ENCODE measurements at regions of chr3 and their contacts with region 1.

Region 1: DNA sequence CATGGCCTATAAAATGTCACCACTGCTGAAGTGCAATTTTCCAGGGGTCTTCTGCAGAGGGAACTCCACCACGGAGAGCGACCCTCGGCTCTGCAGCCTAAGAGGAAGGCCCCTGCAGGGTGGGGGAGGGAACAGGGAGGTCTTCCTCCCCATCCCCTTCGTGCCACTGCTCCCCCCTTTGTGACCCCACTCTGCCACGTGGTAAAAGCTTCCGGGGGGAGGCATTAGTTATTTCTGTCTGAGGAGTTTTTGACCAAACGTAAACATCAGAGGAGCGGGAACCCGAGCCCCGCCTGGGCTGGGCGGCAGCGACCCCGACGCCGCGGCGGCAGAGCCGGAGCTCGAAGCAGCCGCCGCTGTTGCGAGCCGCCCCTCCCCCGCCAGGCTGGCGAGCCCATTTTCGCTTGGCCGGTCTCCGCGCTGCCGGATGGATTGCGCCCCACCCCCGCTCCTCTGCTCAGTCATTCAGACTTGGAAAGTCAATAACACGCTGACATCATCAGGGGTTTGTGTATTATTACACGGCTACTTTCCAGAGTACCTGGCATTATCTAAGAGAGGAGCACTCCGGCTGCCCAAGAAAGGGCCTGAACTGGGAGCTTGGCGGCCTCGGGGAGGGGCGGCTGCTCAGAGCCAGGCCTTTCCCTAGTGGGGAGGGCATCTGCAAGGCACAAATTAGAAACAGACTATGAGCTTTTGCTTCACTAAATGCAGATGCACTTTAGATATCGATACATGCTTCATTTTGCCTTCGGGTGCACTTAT is 162.5 kb upstream of the TBL1XR1 start:
- DNase-seq: peak; percentile 95
- H3K4me3 Mint-ChIP-seq: peak overlapping the region; percentile 61
- H3K27ac Mint-ChIP-seq: peak overlapping the region; percentile 92
- H3K4me1 Mint-ChIP-seq: peaks cover 43% of the 10 kb centered on the region
- H3K27me3 Mint-ChIP-seq: no peaks in the 10 kb centered on the region

Region 2: DNA sequence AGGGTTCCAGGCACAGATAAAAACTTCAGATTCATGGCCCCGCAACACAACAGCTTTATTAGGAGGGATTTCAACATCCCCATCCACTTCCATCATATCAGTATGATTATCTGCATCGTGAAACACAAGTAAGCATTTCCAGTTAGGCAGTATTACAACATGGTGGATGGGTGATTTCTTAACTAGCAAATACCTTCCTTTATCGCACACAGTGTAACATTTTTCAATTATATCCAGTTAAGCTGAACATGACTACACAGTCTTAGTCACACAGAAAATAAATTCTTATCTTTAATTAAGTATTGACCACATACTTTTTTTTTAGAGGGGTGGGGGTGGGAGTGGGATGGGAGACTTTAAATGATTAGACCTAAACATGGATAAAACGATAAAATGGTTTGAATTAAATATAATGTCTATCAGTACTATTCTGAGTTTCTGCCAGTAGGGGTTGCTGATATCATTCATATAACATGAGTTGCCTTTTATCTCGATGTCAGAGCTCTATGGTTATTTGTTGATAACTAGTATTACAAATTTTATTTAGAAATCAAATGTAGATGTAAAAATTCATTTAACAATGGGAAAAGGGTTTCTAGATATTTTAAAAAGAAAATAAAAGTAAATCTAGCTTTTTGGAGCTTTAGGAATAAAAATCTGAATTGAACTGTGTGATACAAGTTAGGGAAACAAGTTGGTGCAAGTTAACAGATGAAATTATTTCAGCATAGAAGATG is 309.1 kb before region 1 on chr3:
- CTCF ChIA-PET with region 1: interaction called, 15 read pairs
- POLR2A ChIA-PET with region 1: interaction called, 8 read pairs
- DNase-seq: no peak
- H3K4me3 Mint-ChIP-seq: no peak overlapping the region
- H3K27ac Mint-ChIP-seq: no peak overlapping the region
- H3K4me1 Mint-ChIP-seq: peaks cover 7% of the 10 kb centered on the region
- H3K27me3 Mint-ChIP-seq: no peaks in the 10 kb centered on the region

Region 3: DNA sequence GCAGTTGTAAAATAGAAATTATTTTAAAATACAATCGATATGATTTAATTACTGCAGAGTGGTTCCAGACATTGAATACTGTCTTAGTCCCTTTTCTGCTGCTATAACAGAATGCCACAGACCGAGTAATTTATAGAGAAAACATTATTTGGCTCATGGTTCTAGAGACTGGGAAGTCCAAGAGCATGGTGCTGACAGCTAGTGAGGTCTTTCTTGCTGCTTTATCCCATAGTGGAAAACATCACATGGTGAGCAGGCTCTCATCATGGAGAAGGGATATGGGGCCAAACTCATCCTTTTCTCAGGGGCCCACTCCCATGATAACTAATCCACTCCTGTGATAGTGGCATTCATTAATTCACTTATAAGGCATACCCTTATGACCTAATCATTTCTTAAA is 42.5 kb before region 1 on chr3:
- CTCF ChIA-PET with region 1: no interaction called
- POLR2A ChIA-PET with region 1: interaction called, 12 read pairs
- DNase-seq: no peak
- H3K4me3 Mint-ChIP-seq: no peak overlapping the region
- H3K27ac Mint-ChIP-seq: no peak overlapping the region
- H3K4me1 Mint-ChIP-seq: peaks cover 25% of the 10 kb centered on the region
- H3K27me3 Mint-ChIP-seq: peaks cover 12% of the 10 kb centered on the region

Region 4: GRCh38 chr3:177379045-177379444 is 19.3 kb after region 1 on chr3:
- CTCF ChIA-PET with region 1: no interaction called
- POLR2A ChIA-PET with region 1: no interaction called
- DNase-seq: no peak
- H3K4me3 Mint-ChIP-seq: no peak overlapping the region
- H3K27ac Mint-ChIP-seq: no peak overlapping the region
- H3K4me1 Mint-ChIP-seq: peaks cover 5% of the 10 kb centered on the region
- H3K27me3 Mint-ChIP-seq: no peaks in the 10 kb centered on the region

Region 5: GRCh38 chr3:177426878-177427495 is 67.2 kb after region 1 on chr3:
- CTCF ChIA-PET with region 1: no interaction called
- POLR2A ChIA-PET with region 1: interaction called, 19 read pairs
- DNase-seq: peak; percentile 65
- H3K4me3 Mint-ChIP-seq: peak overlapping the region; percentile 56
- H3K27ac Mint-ChIP-seq: peak overlapping the region; percentile 73
- H3K4me1 Mint-ChIP-seq: peaks cover 26% of the 10 kb centered on the region
- H3K27me3 Mint-ChIP-seq: peaks cover 6% of the 10 kb centered on the region

Region 6: DNA sequence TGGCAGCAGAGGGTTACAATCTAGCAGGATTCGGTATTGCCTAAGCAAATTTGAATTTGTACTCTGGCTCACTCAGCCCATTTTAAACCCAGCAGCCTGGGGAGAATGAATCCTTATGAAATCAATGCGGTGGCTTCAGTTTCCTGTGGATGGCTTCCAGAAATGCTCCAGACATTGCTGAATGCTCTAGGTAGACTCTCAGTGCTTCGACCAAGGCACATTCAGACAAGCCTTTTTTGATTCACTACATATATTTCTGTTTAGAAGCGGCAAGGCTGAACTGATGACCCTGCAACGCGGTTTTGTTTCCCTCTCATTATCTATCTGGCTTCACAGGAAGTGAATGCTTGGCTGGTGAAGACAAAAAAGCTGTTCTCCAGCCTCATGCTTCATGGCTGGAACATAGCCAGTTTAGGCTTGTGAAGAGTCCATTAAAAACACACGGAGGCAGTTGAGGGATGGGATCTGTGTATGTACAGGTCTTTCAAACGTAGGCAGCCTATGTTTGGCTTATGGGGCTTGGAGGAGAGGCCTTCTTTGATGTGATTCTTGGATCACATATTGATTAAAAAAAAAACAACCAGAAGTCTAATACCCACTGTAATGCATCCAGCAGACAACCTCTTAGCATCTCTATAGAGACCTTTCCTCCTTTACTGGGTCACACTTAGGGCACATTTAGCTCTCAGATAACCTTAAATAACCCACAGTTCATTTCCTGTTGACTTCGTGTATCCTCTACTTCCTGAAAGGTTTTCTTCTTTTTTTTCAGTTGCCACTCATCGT is 237.7 kb after region 1 on chr3:
- CTCF ChIA-PET with region 1: no interaction called
- POLR2A ChIA-PET with region 1: interaction called, 13 read pairs
- DNase-seq: peak; percentile 55
- H3K4me3 Mint-ChIP-seq: peak overlapping the region; percentile 27
- H3K27ac Mint-ChIP-seq: peak overlapping the region; percentile 95
- H3K4me1 Mint-ChIP-seq: peaks cover 64% of the 10 kb centered on the region
- H3K27me3 Mint-ChIP-seq: no peaks in the 10 kb centered on the region

Measured in activated CD4-positive, alpha-beta memory T cell treated with anti-CD3 and anti-CD28 coated beads, Interleukin-2, amount 10 ng/mL, durations not matched to agents 7 days and 5 days (primary cell).